Calu3 (cell line): ENCODE measurements at regions of chr4 and their contacts with region 1.

Region 1: DNA sequence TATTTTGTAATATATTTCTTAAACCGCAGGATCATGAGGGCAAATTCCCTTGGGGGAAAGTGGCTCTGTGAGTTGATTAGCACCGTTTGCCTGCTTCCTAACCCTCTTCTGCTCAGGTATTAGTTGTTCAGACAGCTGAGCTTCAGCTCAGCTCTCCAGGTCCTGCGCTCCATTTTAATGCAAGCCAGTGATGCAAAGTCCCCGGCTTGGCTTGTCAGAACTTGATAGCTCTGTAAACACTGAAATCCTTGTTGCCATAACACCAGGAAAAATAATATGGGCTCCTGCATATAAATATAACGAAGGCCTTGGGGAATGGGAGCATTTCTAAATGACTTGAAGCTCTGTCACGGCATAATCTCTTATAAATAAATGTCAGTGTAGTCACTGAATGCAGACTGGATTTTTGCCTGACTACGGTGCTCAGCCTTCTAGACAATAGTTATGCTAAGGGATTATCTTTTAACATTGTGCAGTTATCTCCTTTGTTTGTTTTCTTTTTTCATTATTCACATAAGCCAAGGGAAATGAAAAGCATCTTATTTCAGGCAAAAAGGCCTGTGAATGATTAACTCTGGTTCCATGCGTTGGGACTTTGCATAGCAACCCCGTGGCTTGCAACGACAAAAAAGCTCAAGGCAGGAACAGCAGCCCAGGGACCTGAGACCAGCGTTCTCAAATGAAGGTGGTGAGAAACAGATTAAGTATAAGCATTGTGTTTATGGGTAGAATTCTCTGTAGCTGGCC is 253.2 kb downstream of the SPRY1 start:
- DNase-seq: peak; percentile 50
- H3K4me3 Mint-ChIP-seq: peak overlapping the region; percentile 49
- H3K27ac Mint-ChIP-seq: peak overlapping the region; percentile 82
- H3K4me1 Mint-ChIP-seq: peaks cover 9% of the 10 kb centered on the region
- H3K27me3 Mint-ChIP-seq: no peaks in the 10 kb centered on the region
- CTCF ChIP-seq: no peak

Region 2: DNA sequence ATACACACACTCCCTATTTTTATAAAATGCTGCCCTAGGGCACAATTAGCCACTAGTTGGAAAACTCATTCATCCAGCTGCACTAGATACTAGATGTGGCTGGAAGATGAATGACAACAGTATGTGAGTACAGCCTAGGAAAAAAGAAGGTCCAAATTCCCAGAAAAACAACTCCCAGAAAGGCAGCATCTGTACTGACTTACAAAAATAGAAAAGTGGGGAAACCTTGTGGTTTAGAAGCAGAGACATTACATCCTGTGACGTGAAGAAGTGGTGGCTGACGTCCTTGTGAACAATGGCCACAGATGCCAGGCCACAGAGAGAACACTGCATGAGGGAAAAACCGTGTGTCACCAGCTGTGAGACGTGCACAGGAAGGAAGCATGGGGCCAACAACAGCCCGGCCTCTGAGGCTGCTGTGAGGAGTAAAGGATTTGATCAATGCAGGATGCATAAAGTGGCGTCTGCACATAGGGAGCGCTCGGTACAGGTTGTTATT is 172.1 kb before region 1 on chr4:
- CTCF ChIA-PET with region 1: no interaction called
- intact Hi-C with region 1: loop called (anchors 10 kb)
- DNase-seq: no peak
- H3K4me3 Mint-ChIP-seq: no peak overlapping the region
- H3K27ac Mint-ChIP-seq: no peak overlapping the region
- H3K4me1 Mint-ChIP-seq: peaks cover 37% of the 10 kb centered on the region
- H3K27me3 Mint-ChIP-seq: no peaks in the 10 kb centered on the region
- CTCF ChIP-seq: no peak

Region 3: GRCh38 chr4:123555233-123555806 is 94.5 kb before region 1 on chr4:
- CTCF ChIA-PET with region 1: no interaction called
- intact Hi-C with region 1: loop called (anchors 2 kb)
- DNase-seq: peak; percentile 88
- H3K4me3 Mint-ChIP-seq: peak overlapping the region; percentile 55
- H3K27ac Mint-ChIP-seq: peak overlapping the region; percentile 90
- H3K4me1 Mint-ChIP-seq: peaks cover 67% of the 10 kb centered on the region
- H3K27me3 Mint-ChIP-seq: no peaks in the 10 kb centered on the region
- CTCF ChIP-seq: no peak

Region 4: GRCh38 chr4:123588631-123589241 is 61.1 kb before region 1 on chr4:
- CTCF ChIA-PET with region 1: interaction called, 5 read pairs
- intact Hi-C with region 1: loop called (anchors 5 kb)
- DNase-seq: peak; percentile 47
- H3K4me3 Mint-ChIP-seq: peak overlapping the region; percentile 57
- H3K27ac Mint-ChIP-seq: peak overlapping the region; percentile 98
- H3K4me1 Mint-ChIP-seq: peaks cover 33% of the 10 kb centered on the region
- H3K27me3 Mint-ChIP-seq: no peaks in the 10 kb centered on the region
- CTCF ChIP-seq: no peak

Region 5: GRCh38 chr4:123599920-123600810 is 49.7 kb before region 1 on chr4:
- CTCF ChIA-PET with region 1: no interaction called
- intact Hi-C with region 1: loop called (anchors 5 kb)
- DNase-seq: peak; percentile 80
- H3K4me3 Mint-ChIP-seq: no peak overlapping the region
- H3K27ac Mint-ChIP-seq: peak overlapping the region; percentile 81
- H3K4me1 Mint-ChIP-seq: peaks cover 50% of the 10 kb centered on the region
- H3K27me3 Mint-ChIP-seq: no peaks in the 10 kb centered on the region
- CTCF ChIP-seq: no peak